ENCODE measurements at regions of chr10 and their contacts with region 1.

Region 1: GRCh38 chr10:119750391-119751230 is 24.8 kb downstream of the INPP5F start:
- H3K4me3 ChIP-seq: no peak overlapping the region
- H3K27ac ChIP-seq: no peak overlapping the region
- H3K4me1 ChIP-seq: peaks cover 17% of the 10 kb centered on the region
- CTCF ChIP-seq: peak; percentile 77

Region 2: DNA sequence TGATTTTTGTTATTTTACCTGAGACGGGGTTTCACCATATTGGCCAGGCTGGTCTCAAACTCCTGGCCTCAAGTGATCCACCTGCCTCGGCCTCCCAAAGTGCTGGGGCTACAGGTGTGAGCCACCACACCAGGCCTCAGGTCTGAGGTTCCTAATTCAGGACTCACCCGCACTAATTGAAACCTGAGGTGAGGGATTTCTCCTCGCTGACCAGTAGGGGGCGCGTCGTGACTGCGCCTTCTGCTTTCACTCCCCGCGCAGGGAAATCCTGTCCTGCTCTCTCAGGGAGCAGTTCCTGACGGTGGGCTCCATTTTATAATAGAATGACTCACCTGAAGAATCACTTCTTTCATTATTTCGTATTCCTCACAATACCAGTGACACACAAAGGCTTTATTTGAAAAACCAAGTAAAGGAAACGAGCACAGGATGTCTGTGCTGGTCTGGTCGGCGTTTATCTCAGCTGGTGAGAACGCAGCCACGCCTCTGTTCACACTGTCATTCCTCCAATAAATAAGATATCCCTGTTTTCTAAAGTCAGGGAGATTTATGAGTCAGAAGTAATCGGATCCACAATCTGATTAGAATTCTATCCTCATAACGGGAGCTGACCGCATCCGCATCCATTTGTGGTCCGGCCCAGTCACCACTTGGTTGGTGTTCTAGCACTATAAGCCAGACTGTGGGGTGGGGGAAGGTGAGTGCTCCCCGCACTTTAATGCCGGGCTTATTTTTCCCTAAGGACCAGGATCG is 64.0 kb before region 1 on chr10:
- CTCF ChIA-PET with region 1: interaction called, 23 read pairs
- POLR2A ChIA-PET with region 1: no interaction called
- H3K4me3 ChIP-seq: peak overlapping the region; percentile 12
- H3K27ac ChIP-seq: peak overlapping the region; percentile 51; the same call in 1 of the 2 replicates
- H3K4me1 ChIP-seq: no peaks in the 10 kb centered on the region
- CTCF ChIP-seq: peak; percentile 94

Region 3: GRCh38 chr10:119737827-119738226 is 12.8 kb before region 1 on chr10:
- CTCF ChIA-PET with region 1: interaction called, 15 read pairs
- POLR2A ChIA-PET with region 1: no interaction called
- H3K4me3 ChIP-seq: no peak overlapping the region
- H3K27ac ChIP-seq: no peak overlapping the region
- H3K4me1 ChIP-seq: peaks cover 32% of the 10 kb centered on the region
- CTCF ChIP-seq: no peak

Region 4: DNA sequence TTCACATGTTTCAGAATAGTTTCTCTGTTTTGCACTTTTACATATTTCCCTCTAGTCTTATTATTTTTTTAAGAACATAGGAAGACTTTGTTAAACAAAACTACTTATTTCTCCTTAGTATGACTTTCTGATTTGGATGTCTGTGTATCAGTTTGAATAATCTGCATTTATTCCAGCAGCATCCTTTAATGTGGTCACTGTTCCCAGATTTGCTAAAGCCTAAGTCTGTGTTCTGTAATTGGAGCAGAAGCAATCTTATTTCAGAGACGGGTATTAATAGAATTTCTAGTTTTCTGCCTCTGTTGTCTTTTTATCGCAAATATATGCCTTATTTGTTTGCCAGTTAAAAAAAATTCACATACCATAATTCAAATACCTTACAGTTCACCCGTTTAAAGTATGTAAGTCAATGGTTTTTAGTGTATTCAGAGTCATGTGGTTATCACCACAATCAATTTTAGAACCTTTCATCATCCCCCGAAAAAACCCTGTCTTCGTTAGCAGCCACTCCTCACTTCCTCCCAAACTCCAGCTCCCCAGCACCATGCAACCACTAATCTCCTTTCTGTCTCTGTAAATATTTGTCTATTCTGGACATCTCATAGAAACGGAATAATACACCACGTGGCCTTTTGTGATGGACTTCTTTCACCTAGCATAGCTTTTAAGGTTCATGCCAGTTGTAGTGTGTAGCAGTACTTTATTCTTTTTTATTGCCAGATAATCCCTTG is 33.9 kb after region 1 on chr10:
- CTCF ChIA-PET with region 1: interaction called, 13 read pairs
- POLR2A ChIA-PET with region 1: no interaction called
- H3K4me3 ChIP-seq: no peak overlapping the region
- H3K27ac ChIP-seq: no peak overlapping the region; the same call in 1 of the 2 replicates
- H3K4me1 ChIP-seq: peaks cover 19% of the 10 kb centered on the region
- CTCF ChIP-seq: no peak

Region 5: GRCh38 chr10:119834188-119834587 is 83.6 kb after region 1 on chr10:
- CTCF ChIA-PET with region 1: interaction called, 13 read pairs
- POLR2A ChIA-PET with region 1: no interaction called
- H3K4me3 ChIP-seq: no peak overlapping the region
- H3K27ac ChIP-seq: no peak overlapping the region
- H3K4me1 ChIP-seq: no peaks in the 10 kb centered on the region
- CTCF ChIP-seq: no peak

Region 6: DNA sequence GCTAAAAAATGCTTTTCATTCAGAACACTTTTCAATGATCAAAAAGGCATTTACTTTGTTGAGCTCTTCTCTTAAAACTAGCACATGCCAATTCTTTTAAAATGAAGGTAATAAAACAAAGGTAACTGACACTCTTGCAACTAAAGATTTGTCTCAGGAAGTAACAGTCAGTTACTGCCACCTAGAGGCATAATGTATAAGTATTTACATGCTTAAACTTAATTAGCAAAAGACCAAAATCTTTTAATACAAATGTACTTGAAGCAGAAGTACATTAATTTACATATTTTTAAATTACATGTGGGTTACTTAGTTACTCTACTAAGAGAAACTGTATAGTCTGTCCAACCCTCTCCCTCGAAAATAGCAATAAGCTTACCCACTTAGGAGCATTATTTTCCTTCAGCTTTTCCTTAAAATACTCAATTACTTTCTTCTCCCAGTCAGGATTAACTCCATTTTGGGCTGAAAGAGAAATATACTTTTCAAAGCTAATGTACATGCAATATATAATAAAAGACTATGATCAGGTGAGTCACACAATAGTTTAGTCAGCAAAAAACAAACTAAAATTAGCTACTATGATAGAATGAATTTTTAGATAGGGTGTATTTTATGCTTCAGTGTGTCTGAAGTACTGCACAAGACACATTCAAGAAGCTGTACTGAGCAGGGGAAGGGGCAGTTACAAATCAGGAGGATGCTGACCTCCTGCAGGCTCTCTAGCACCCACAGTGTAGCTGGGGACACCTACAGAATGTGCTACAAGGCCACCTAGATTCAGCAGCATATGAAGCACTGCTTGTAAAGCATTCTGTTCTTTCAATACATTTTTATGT is 109.0 kb after region 1 on chr10:
- CTCF ChIA-PET with region 1: interaction called, 119 read pairs
- POLR2A ChIA-PET with region 1: no interaction called
- H3K4me3 ChIP-seq: no peak overlapping the region
- H3K27ac ChIP-seq: no peak overlapping the region
- H3K4me1 ChIP-seq: peaks cover 14% of the 10 kb centered on the region
- CTCF ChIP-seq: no peak

Region 7: GRCh38 chr10:119919826-119920225 is 169.2 kb after region 1 on chr10:
- CTCF ChIA-PET with region 1: interaction called, 10 read pairs
- POLR2A ChIA-PET with region 1: no interaction called
- H3K4me3 ChIP-seq: no peak overlapping the region
- H3K27ac ChIP-seq: no peak overlapping the region
- H3K4me1 ChIP-seq: no peaks in the 10 kb centered on the region
- CTCF ChIP-seq: no peak